ENCODE measurements at regions of chr18 and their contacts with region 1.

Region 1: DNA sequence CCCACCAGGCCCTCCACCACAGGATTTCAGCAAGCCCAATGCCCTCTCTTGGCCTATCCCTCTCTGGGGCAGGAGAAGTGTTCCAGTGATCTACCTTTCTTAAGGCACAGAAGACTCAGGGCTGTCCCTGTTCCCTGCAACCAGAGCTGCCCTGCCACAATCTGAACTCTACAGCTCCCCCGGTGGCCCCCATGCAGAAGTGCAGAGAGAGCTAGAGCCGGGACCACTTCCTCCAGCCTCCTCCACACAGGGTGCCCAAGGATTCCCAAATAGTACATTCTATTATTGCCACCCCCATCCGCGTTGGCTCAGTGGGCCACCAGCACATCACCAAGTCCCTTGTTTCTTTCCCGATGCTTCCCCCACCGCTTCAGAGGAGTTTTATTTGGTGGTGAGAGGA is 114.8 kb upstream of the PTPRM start:
- DNase-seq: no peak
- H3K4me3 ChIP-seq: no peak overlapping the region
- H3K27ac ChIP-seq: no peak overlapping the region
- H3K4me1 ChIP-seq: peaks cover 4 to 16% (median 10%) of the 10 kb centered on the region in 4 donors
- H3K27me3 ChIP-seq: no peaks in the 10 kb centered on the region
- CTCF ChIP-seq: peak; percentile 51 to 73 (median 51)
- EP300 ChIP-seq: no peak
- POLR2A ChIP-seq: no peak

Region 2: DNA sequence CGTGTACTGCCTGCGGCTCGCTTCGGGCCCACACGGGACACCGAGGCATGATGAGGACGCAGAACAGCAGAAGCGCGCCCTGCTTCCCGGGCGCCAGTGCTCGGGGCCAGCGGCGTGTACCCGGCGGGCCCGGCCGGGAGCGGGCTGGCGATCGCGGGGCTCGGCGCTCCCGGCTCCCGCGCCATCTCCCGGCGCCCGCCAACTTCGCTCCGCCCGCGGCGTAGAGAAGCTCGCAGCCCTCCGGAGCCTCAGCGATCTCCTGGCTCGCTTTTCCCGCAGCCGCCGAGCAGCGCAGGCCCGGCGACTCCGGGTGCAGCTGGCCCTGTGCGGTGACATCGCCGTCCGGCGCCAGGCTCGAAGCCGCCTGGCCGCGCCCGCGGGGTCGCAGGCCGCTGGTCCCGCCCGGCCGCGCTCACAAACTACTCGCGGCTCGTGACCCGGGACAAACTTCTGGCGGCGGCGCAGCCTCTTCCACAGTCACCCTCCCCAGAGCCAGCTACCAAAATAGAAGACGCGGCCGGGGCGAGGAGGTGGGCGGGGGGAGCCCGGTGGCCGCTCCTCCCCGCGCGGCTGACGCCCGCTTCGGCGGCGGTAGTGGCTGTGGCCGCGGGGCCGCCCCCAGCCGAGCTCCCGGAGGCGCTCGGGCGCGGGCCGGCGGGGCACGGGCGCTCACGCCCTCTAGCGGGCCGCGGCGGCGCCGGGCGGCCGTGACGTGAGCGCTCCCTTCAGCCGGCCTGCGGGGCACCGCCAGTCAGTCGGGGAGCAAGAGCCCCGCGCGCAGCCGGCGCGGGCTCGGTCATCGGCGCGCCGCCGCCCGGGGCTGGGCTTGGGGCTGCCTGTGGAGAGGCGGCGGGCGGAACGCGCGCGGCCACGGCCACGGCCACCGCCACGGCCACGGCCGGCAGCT is 114.5 kb after region 1 on chr18 and contains the start of gene PTPRM:
- intact Hi-C with region 1: loop called (anchors 5 kb)
- DNase-seq: peak; percentile 95
- H3K4me3 ChIP-seq: peak within 1 kb of the TSS; percentile 86 to 93 (median 88)
- H3K27ac ChIP-seq: peak within 1 kb of the TSS; percentile 93 to 99 (median 98)
- H3K4me1 ChIP-seq: peaks cover 32 to 51% (median 39%) of the 10 kb centered on the region in 4 donors
- H3K27me3 ChIP-seq: no peaks in the 10 kb centered on the region
- CTCF ChIP-seq: peak in 2 of 3 experiments; percentile 61 to 83
- EP300 ChIP-seq: no peak
- POLR2A ChIP-seq: peak; percentile 59
- total RNA-seq, gene PTPRM: 62.7 to 94.0 (median 76.0) TPM

Measured in esophagus muscularis mucosa (tissue), 4 donors.